ENCODE measurements at regions of chr11 and their contacts with region 1.

Region 1: GRCh38 chr11:86919557-86920210 is 35.5 kb downstream of the FZD4 start:
- DNase-seq: no peak
- ATAC-seq: peak in 1 of 2 donors; percentile 66
- H3K4me3 ChIP-seq: no peak overlapping the region
- H3K27ac ChIP-seq: peak overlapping the region; percentile 30 to 62 (median 50)
- H3K4me1 ChIP-seq: peaks cover 8 to 10% of the 10 kb centered on the region in 2 donors
- H3K27me3 ChIP-seq: no peaks in the 10 kb centered on the region
- CTCF ChIP-seq: peak; percentile 37 to 57 (median 52)
- POLR2A ChIP-seq: no peak

Region 2: DNA sequence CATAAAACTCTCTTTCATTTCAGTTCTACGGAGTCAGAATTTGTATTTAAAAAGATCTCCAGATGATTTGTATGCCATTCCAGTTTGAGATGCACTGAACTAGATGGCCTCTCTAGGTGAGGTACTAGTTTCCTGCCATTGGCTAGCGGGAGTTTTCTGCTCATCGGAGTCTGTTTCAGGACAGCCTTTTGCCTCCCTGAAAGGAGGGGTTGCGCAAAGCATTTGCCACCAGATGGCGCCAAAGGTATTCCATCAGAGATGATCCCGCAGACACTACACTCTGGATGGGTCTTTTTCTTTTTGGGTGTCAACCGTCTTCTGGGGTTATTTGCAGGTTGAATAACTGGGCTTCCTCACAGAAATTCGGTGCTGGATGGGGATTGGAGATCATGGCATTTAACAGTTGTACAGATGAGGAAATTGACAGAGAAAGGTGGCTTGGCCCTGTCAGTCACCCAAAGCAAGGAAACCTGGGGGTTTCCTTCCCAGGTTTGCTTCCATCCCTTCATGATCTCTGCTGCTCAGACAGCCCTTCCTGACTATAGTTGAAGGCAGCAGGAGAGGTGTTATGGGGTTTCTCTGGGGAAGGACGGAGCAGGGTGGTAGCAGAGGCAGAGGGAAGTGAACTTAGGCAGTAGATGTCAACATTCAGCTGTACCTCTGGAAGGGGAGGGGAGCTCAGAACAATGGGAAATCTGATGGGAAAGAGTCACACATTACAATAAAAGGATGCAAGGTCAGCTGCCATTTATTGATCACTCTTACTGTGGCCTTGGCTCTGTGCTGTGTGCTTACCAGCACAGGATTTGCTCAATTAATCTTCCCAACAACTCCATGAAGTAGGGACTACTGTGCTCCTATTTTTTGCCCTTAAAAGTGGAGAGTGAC is 463.4 kb before region 1 on chr11:
- in situ Hi-C with region 1: no loop called
- intact Hi-C with region 1: loop called (anchors 1 kb)
- DNase-seq: peak; percentile 64 to 78
- ATAC-seq: peak; percentile 81 to 90
- H3K4me3 ChIP-seq: no peak overlapping the region
- H3K27ac ChIP-seq: peak overlapping the region in 1 of 4 donors; percentile 26
- H3K4me1 ChIP-seq: peaks cover 9 to 15% of the 10 kb centered on the region in 2 donors
- H3K27me3 ChIP-seq: no peaks in the 10 kb centered on the region
- CTCF ChIP-seq: peak; percentile 81 to 91 (median 85)
- POLR2A ChIP-seq: no peak

Region 3: GRCh38 chr11:86869966-86870570 is 49.6 kb before region 1 on chr11:
- in situ Hi-C with region 1: loop called in 2 of 4 experiments (anchors 10 kb)
- intact Hi-C with region 1: loop called (anchors 1 kb)
- DNase-seq: peak; percentile 17 to 24
- ATAC-seq: peak; percentile 82 to 84
- H3K4me3 ChIP-seq: no peak overlapping the region
- H3K27ac ChIP-seq: no peak overlapping the region
- H3K4me1 ChIP-seq: no peaks in the 10 kb centered on the region
- H3K27me3 ChIP-seq: no peaks in the 10 kb centered on the region
- CTCF ChIP-seq: peak; percentile 42 to 77 (median 70)
- POLR2A ChIP-seq: no peak

Measured in gastrocnemius medialis (tissue), 4 donors.